ENCODE measurements at regions of chr17 and their contacts with region 1.

Region 1: DNA sequence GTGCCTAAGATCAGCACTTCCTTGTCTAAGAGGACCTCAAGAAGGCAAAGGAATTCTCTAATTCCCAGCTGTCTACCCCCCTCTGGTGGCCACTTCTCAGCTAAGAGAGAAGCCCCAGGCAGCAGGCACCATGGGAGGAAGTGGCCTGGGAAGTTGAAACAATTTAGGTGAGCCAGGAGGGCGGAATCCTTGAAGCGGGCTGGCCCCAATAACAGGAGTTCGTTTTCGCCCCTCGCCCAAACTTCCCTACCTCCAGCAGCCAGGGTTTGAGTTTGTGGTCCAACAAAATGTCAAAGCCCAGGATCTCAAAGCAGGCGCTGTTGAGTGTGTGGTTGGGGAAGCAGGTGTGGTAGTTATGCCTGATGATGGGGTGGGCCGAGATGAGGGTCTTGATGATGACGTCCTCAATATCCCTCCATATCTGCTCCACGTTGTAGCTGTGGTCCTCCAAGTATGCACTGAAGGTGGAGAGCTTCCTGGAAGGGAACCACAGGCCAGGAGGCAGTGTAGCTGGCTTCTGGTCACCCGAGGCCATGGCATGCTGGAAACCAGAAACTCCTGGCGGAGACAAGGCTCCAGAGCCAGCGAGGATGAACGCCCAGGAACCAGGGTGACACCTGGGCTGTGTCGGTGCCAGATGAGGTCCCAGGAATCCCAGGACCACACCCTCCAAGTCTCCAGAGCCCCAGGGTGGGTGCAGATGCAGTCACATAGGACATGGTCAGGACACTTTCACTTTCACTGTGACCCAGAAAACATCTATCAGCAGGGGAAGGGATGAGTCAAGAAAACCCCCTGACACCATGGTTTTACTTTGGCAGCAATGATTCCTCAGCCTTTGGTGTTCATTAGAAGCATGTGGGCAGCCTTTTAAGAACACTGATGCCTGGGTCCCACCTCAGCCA is 25.6 kb downstream of the TTLL6 start:
- DNase-seq: peak; percentile 60 to 66 (median 65)
- H3K4me3 ChIP-seq: no peak overlapping the region
- H3K27ac ChIP-seq: no peak overlapping the region
- H3K4me1 ChIP-seq: peaks cover 0 to 11% (median 1%) of the 10 kb centered on the region in 4 experiments
- H3K27me3 ChIP-seq: peaks cover 0 to 68% (median 22%) of the 10 kb centered on the region in 5 experiments

Region 2: GRCh38 chr17:48756830-48757251 is 34.5 kb before region 1 on chr17:
- CTCF ChIA-PET with region 1: interaction called, 12 read pairs
- POLR2A ChIA-PET with region 1: interaction called, 3 read pairs
- DNase-seq: peak; percentile 68 to 83 (median 78)
- H3K4me3 ChIP-seq: no peak overlapping the region
- H3K27ac ChIP-seq: no peak overlapping the region
- H3K4me1 ChIP-seq: peaks cover 4 to 24% (median 22%) of the 10 kb centered on the region in 4 experiments
- H3K27me3 ChIP-seq: peaks cover 17 to 57% (median 37%) of the 10 kb centered on the region in 5 experiments

Region 3: GRCh38 chr17:48779421-48779820 is 12.0 kb before region 1 on chr17:
- CTCF ChIA-PET with region 1: interaction called, 19 read pairs
- POLR2A ChIA-PET with region 1: no interaction called
- DNase-seq: no peak
- H3K4me3 ChIP-seq: no peak overlapping the region
- H3K27ac ChIP-seq: no peak overlapping the region
- H3K4me1 ChIP-seq: no peaks in the 10 kb centered on the region
- H3K27me3 ChIP-seq: peaks cover 0 to 25% (median 2%) of the 10 kb centered on the region in 5 experiments

Region 4: DNA sequence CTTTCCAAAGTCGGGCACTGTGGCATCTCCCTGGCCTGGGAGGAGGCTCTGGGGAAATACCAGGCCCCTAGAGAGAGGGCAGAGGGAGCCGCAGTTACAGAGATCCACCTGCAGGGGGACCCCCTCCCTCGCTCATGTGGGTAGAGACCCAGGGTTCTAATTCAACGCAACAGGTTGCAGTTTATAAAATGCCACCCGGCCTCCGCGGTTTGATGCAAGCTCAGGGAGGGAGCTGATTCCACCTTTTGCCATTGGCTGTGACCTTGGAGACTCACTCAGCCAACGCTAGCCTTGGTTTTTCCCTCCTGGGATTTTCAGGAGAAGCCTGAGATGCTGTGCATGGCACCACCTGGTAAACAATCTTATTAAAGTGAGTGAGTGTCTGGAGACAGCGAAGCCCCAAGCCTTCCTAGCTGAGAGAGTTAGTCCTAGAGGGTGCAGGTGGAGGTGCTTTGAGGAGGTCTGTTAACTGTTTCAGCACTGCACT is 13.6 kb after region 1 on chr17:
- CTCF ChIA-PET with region 1: interaction called, 10 read pairs
- POLR2A ChIA-PET with region 1: no interaction called
- DNase-seq: peak; percentile 47 to 69 (median 59)
- H3K4me3 ChIP-seq: no peak overlapping the region
- H3K27ac ChIP-seq: no peak overlapping the region
- H3K4me1 ChIP-seq: peaks cover 0 to 8% (median 5%) of the 10 kb centered on the region in 4 experiments
- H3K27me3 ChIP-seq: peaks cover 0 to 18% (median 1%) of the 10 kb centered on the region in 5 experiments